CD14-positive monocyte (primary cell): ENCODE measurements at regions of chr9 and their contacts with region 1.

Region 1: GRCh38 chr9:112379177-112380101 is 469 bp upstream of the HSDL2 start:
- DNase-seq: peak; percentile 97 to 99 (median 98)
- H3K4me3 ChIP-seq: peak overlapping the region; percentile 90 to 98 (median 92)
- H3K4me3 Mint-ChIP-seq: peak overlapping the region; percentile 95 to 99
- H3K27ac ChIP-seq: peak overlapping the region; percentile 98 to 99
- H3K27ac Mint-ChIP-seq: peak overlapping the region; percentile 98 to 100 (median 99)
- H3K4me1 ChIP-seq: peaks cover 32 to 42% of the 10 kb centered on the region in 2 donors
- H3K4me1 Mint-ChIP-seq: peaks cover 56% of the 10 kb centered on the region
- H3K27me3 ChIP-seq: no peaks in the 10 kb centered on the region
- H3K27me3 Mint-ChIP-seq: no peaks in the 10 kb centered on the region
- CTCF ChIP-seq: no peak

Region 2: DNA sequence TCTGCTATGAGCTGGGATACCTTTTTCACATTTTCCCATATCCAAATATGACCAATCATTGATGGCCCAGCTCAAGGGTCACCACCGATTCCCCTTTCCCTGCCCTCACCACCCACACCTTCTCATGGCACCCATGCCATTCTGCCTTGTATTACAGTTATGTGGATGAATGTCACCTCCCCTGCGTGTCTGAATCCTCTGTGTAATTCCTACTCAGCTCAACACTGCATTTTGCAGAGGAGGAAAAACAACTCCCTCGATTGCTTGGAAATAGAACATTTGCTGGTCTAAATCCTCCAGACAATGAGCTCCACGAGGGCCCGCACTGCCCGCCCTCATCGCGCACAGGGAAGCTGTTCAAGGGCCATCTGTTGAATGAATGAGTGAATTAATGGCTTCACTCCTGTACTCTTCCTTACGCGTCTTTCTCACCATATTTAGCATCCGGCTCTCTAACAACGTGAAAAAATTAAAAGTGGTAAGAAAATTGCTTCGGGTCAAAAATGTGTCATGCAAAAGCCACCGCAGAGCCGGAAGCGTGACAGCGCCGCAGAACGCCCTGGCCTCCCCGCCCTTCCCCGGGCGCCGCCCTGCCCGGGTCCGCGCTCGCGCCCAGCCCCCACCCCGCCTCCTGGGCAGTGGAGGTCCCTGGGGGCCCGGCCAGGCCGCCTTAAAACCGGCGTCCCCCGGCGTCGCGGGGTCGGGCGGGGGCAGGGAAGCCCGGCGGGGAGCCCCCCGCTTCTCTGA is 205.0 kb before region 1 on chr9:
- intact Hi-C with region 1: loop called in 1 of 2 experiments (anchors 5 kb)
- DNase-seq: peak; percentile 83 to 89 (median 85)
- H3K4me3 ChIP-seq: peak overlapping the region; percentile 40 to 79 (median 50)
- H3K4me3 Mint-ChIP-seq: peak overlapping the region; percentile 82 to 91
- H3K27ac ChIP-seq: peak overlapping the region; percentile 82 to 94
- H3K27ac Mint-ChIP-seq: peak overlapping the region; percentile 95 to 98 (median 98)
- H3K4me1 ChIP-seq: peaks cover 80 to 85% of the 10 kb centered on the region in 2 donors
- H3K4me1 Mint-ChIP-seq: peaks cover 85% of the 10 kb centered on the region
- H3K27me3 ChIP-seq: no peaks in the 10 kb centered on the region
- H3K27me3 Mint-ChIP-seq: peaks cover 0 to 2% (median 0%) of the 10 kb centered on the region in 3 donors
- CTCF ChIP-seq: no peak

Region 3: GRCh38 chr9:112327718-112328464 is 51.5 kb before region 1 on chr9:
- intact Hi-C with region 1: loop called (anchors 5 kb)
- DNase-seq: peak; percentile 33 to 80 (median 37)
- H3K4me3 ChIP-seq: no peak overlapping the region
- H3K4me3 Mint-ChIP-seq: no peak overlapping the region
- H3K27ac ChIP-seq: peak overlapping the region in 1 of 2 donors; percentile 68
- H3K27ac Mint-ChIP-seq: peak overlapping the region in 4 of 7 donors; percentile 7 to 78 (median 46)
- H3K4me1 ChIP-seq: peaks cover 15 to 47% of the 10 kb centered on the region in 2 donors
- H3K4me1 Mint-ChIP-seq: peaks cover 48% of the 10 kb centered on the region
- H3K27me3 ChIP-seq: no peaks in the 10 kb centered on the region
- H3K27me3 Mint-ChIP-seq: no peaks in the 10 kb centered on the region
- CTCF ChIP-seq: no peak

Region 4: GRCh38 chr9:112333639-112334431 is 45.6 kb before region 1 on chr9:
- intact Hi-C with region 1: loop called (anchors 5 kb)
- DNase-seq: peak; percentile 91 to 95 (median 94)
- H3K4me3 ChIP-seq: peak overlapping the region; percentile 69 to 96 (median 75)
- H3K4me3 Mint-ChIP-seq: peak overlapping the region; percentile 93 to 97
- H3K27ac ChIP-seq: peak overlapping the region; percentile 86 to 89
- H3K27ac Mint-ChIP-seq: peak overlapping the region; percentile 87 to 97 (median 95)
- H3K4me1 ChIP-seq: peaks cover 14 to 43% of the 10 kb centered on the region in 2 donors
- H3K4me1 Mint-ChIP-seq: peaks cover 29% of the 10 kb centered on the region
- H3K27me3 ChIP-seq: no peaks in the 10 kb centered on the region
- H3K27me3 Mint-ChIP-seq: peaks cover 0 to 5% (median 0%) of the 10 kb centered on the region in 3 donors
- CTCF ChIP-seq: peak; percentile 53

Region 5: GRCh38 chr9:112366591-112366990 is 12.8 kb before region 1 on chr9:
- intact Hi-C with region 1: no loop called
- DNase-seq: no peak
- H3K4me3 ChIP-seq: no peak overlapping the region
- H3K4me3 Mint-ChIP-seq: no peak overlapping the region
- H3K27ac ChIP-seq: no peak overlapping the region
- H3K27ac Mint-ChIP-seq: no peak overlapping the region
- H3K4me1 ChIP-seq: no peaks in the 10 kb centered on the region
- H3K4me1 Mint-ChIP-seq: peaks cover 2% of the 10 kb centered on the region
- H3K27me3 ChIP-seq: peaks cover 0 to 2% of the 10 kb centered on the region in 2 donors
- H3K27me3 Mint-ChIP-seq: peaks cover 2 to 8% (median 3%) of the 10 kb centered on the region in 3 donors
- CTCF ChIP-seq: no peak

Region 6: GRCh38 chr9:112532427-112532826 is 153.0 kb after region 1 on chr9:
- intact Hi-C with region 1: no loop called
- DNase-seq: peak in 2 of 3 donors; percentile 9 to 35
- H3K4me3 ChIP-seq: no peak overlapping the region
- H3K4me3 Mint-ChIP-seq: no peak overlapping the region
- H3K27ac ChIP-seq: no peak overlapping the region
- H3K27ac Mint-ChIP-seq: no peak overlapping the region
- H3K4me1 ChIP-seq: peaks cover 5% of the 10 kb centered on the region in 2 donors
- H3K4me1 Mint-ChIP-seq: peaks cover 17% of the 10 kb centered on the region
- H3K27me3 ChIP-seq: no peaks in the 10 kb centered on the region
- H3K27me3 Mint-ChIP-seq: no peaks in the 10 kb centered on the region
- CTCF ChIP-seq: no peak

Region 7: GRCh38 chr9:112546149-112547012 is 166.9 kb after region 1 on chr9:
- intact Hi-C with region 1: no loop called
- DNase-seq: peak in 2 of 3 donors; percentile 4 to 43
- H3K4me3 ChIP-seq: no peak overlapping the region
- H3K4me3 Mint-ChIP-seq: peak overlapping the region in 1 of 2 donors; percentile 46
- H3K27ac ChIP-seq: no peak overlapping the region
- H3K27ac Mint-ChIP-seq: peak overlapping the region in 4 of 7 donors; percentile 22 to 84 (median 48)
- H3K4me1 ChIP-seq: peaks cover 15 to 19% of the 10 kb centered on the region in 2 donors
- H3K4me1 Mint-ChIP-seq: peaks cover 30% of the 10 kb centered on the region
- H3K27me3 ChIP-seq: no peaks in the 10 kb centered on the region
- H3K27me3 Mint-ChIP-seq: no peaks in the 10 kb centered on the region
- CTCF ChIP-seq: no peak